Naive thymus-derived CD8-positive, alpha-beta T cell (primary cell): ENCODE measurements at regions of chr12 and their contacts with region 1.

Region 1: DNA sequence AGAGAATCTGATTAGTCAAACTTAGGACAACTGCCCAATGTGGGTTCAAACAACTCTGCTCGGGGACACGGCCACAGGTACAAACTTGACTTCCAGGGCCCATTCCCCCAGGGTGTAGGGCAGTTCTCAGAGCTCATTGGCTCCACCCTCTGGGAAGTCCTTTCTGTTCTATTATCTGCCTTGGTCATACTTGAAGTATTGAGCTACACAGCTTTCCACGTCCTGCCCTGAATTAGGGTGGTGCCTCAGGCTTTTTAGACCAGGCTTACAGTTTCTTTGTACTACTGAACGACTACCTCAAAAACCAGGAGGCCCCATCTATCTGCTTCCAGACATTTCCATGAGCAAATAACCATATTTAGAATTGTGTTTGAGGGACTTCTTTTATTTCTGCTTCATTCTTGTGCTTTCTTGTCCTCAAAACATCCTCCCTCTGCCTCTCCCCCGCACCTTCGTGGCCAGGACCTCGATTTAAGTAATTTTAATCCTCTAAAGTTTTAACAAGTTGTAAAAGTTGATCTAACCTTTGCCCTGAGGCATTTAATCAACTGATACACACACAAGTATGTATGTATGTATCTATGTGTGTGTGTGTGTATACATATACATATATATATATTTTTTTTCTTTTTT is 281.7 kb upstream of the AMIGO2 start:
- DNase-seq: peak; percentile 2 to 62 (median 32)
- ATAC-seq: peak; percentile 54 to 55
- H3K4me3 Mint-ChIP-seq: peak overlapping the region; percentile 66 to 86 (median 80)
- H3K27ac Mint-ChIP-seq: peak overlapping the region in 9 of 10 donors; percentile 89 to 100 (median 98)
- H3K4me1 Mint-ChIP-seq: peaks cover 43 to 64% (median 58%) of the 10 kb centered on the region in 4 donors
- H3K27me3 Mint-ChIP-seq: no peaks in the 10 kb centered on the region

Region 2: DNA sequence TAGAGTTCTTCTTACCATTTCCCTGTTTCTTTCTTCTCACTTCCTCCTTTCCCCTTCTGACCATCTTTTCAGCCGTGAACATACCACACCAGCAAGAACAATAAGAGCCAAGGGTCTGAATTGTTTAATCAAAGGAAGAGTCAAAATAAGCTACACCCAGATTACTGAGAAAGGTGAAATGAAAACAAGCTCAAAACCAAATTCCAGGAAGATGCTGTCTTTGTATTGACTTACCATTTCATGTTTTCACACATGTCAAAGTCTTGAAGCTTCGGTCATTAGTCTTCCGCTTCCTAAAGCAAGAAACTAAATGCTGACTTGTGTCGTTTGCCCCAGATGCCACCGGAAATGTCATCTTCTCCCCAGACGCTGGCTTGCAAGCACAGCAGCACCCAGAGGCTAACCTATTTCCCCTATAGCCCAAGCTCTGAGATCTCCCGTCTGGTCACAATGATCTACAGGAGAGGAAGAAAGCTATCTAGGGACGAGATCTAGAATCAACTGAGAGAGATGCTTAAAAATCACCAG is 145.3 kb before region 1 on chr12:
- POLR2A ChIA-PET with region 1: interaction called, 16 read pairs
- DNase-seq: peak in 9 of 10 donors; percentile 50 to 84 (median 70)
- ATAC-seq: peak; percentile 43 to 69
- H3K4me3 Mint-ChIP-seq: peak overlapping the region; percentile 95 to 99 (median 98)
- H3K27ac Mint-ChIP-seq: peak overlapping the region; percentile 93 to 99 (median 96)
- H3K4me1 Mint-ChIP-seq: peaks cover 9 to 66% (median 23%) of the 10 kb centered on the region in 4 donors
- H3K27me3 Mint-ChIP-seq: no peaks in the 10 kb centered on the region

Region 3: GRCh38 chr12:47276621-47277309 is 84.7 kb before region 1 on chr12:
- POLR2A ChIA-PET with region 1: interaction called, 19 read pairs
- DNase-seq: peak; percentile 8 to 87 (median 68)
- ATAC-seq: peak; percentile 92 to 99
- H3K4me3 Mint-ChIP-seq: peak overlapping the region; percentile 16 to 80 (median 72)
- H3K27ac Mint-ChIP-seq: peak overlapping the region; percentile 88 to 96 (median 92)
- H3K4me1 Mint-ChIP-seq: peaks cover 33 to 84% (median 81%) of the 10 kb centered on the region in 4 donors
- H3K27me3 Mint-ChIP-seq: no peaks in the 10 kb centered on the region

Region 4: DNA sequence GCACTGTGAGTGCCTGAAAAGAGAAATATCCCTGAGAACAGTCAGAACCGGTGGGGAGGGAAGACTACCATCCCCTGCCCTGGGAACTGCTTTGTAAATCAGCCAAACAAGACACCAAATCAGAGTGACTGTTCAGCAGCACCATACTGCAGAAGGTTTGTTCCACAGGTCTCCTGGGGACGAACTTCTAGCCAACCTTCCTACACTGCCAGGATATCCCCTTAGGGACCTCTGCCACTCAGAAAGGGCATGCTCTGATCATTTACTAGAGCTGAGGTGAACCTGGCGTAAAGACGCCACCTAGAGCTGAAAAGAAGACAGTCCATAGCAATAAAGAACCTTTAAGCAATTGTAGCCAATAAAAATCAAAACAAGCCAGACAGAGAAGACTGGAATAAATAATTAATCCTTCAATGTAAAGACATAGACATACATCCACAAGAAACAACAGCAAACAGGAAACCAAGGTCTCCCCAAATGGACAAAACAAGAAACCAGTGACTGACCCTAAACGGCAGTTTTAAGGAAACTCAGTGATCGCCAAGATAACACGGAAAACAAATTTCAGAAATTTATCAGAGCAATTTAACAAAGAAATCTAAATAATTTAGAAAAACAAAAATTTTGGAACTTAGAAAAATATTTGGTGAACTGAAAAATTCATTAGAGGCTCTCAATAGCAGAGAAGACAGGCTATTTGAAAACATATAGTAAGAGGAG is 53.7 kb before region 1 on chr12:
- POLR2A ChIA-PET with region 1: interaction called, 12 read pairs
- DNase-seq: peak in 9 of 10 donors; percentile 27 to 77 (median 50)
- ATAC-seq: peak; percentile 93 to 96
- H3K4me3 Mint-ChIP-seq: peak overlapping the region; percentile 79 to 93 (median 90)
- H3K27ac Mint-ChIP-seq: peak overlapping the region; percentile 69 to 96 (median 92)
- H3K4me1 Mint-ChIP-seq: peaks cover 20 to 45% (median 43%) of the 10 kb centered on the region in 4 donors
- H3K27me3 Mint-ChIP-seq: no peaks in the 10 kb centered on the region

Region 5: GRCh38 chr12:47391566-47391965 is 30.1 kb after region 1 on chr12:
- POLR2A ChIA-PET with region 1: interaction called, 15 read pairs
- DNase-seq: peak; percentile 29 to 85 (median 72)
- ATAC-seq: peak; percentile 83 to 96
- H3K4me3 Mint-ChIP-seq: peak overlapping the region in 9 of 10 donors; percentile 28 to 83 (median 68)
- H3K27ac Mint-ChIP-seq: peak overlapping the region; percentile 95 to 100 (median 97)
- H3K4me1 Mint-ChIP-seq: peaks cover 28 to 82% (median 78%) of the 10 kb centered on the region in 4 donors
- H3K27me3 Mint-ChIP-seq: no peaks in the 10 kb centered on the region